ENCODE measurements at regions of chr1 and their contacts with region 1.

Region 1: DNA sequence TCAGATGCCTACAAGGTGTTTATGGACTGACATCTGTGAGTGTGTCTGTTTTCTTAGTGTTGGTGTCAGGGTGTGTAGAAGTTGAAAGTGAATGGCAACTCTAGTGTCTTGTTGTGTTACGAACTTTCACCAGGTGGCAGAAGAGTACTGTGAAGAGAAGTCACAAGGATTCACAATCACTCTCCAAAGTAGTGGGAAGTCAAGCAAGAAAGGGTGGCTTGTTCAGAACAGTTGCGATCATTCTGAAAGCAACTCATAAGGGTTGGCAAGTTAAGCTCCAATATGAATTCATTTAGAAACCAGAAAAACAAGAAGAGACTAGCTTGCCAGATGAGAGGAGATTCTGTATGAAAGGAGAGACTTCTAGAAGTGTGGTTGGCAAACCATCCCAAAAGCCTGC is 86.1 kb downstream of the FASLG start:
- DNase-seq: peak; percentile 82
- H3K4me3 ChIP-seq: no peak overlapping the region
- H3K27ac ChIP-seq: peak overlapping the region; percentile 86
- H3K4me1 ChIP-seq: peaks cover 21% of the 10 kb centered on the region
- H3K27me3 ChIP-seq: no peaks in the 10 kb centered on the region
- CTCF ChIP-seq: peak; percentile 64 to 66
- POLR2A ChIP-seq: no peak

Region 2: DNA sequence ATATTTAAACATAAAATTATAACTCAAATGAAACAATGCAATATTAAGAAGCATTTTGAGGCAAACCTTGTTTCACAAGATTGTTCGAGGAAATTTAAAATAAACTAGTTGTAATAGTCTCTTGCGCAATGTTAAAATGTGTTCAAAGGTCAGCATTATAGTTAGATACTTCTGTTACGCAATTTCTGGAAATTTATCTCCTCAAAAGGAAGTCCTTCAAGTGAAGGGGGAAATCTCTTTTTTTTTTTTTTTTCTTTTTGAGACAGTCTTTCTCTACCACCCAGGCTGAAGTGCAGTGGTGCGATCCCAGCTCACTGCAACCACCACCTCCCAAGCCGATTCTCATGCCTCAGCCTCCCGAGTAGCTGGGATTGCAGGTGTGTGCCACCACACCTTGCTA is 1378.9 kb before region 1 on chr1:
- CTCF ChIA-PET with region 1: no interaction called
- POLR2A ChIA-PET with region 1: no interaction called
- dilution Hi-C with region 1: no loop called
- intact Hi-C with region 1: no loop called
- DNase-seq: no peak
- H3K4me3 ChIP-seq: no peak overlapping the region
- H3K27ac ChIP-seq: no peak overlapping the region
- H3K4me1 ChIP-seq: no peaks in the 10 kb centered on the region
- H3K27me3 ChIP-seq: no peaks in the 10 kb centered on the region
- CTCF ChIP-seq: no peak
- POLR2A ChIP-seq: no peak

Region 3: DNA sequence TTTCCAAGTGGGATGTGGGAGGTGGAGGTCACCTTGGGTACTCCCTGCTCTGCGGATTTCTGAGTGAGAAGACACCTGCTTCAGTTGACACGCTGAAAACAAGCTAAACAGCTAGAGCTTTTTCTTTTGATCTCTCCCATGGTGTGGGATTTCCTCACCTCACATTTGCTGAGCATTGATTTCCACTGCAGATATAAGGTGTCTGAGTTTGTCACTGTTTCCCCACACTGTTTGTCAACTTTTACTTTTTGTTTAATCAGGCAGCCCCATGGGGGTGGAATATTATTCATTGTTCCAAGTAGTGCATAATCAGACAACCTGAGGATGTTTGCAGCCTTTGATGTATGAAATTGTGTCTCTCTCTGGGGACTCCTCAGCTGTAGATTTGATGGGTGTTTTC is 36.6 kb before region 1 on chr1:
- CTCF ChIA-PET with region 1: no interaction called
- POLR2A ChIA-PET with region 1: no interaction called
- dilution Hi-C with region 1: no loop called
- intact Hi-C with region 1: no loop called
- DNase-seq: no peak
- H3K4me3 ChIP-seq: no peak overlapping the region
- H3K27ac ChIP-seq: no peak overlapping the region
- H3K4me1 ChIP-seq: no peaks in the 10 kb centered on the region
- H3K27me3 ChIP-seq: no peaks in the 10 kb centered on the region
- CTCF ChIP-seq: no peak
- POLR2A ChIP-seq: no peak

Region 4: GRCh38 chr1:172826096-172826743 is 81.2 kb after region 1 on chr1:
- CTCF ChIA-PET with region 1: interaction called, 30 read pairs
- POLR2A ChIA-PET with region 1: no interaction called
- dilution Hi-C with region 1: no loop called
- intact Hi-C with region 1: loop called (anchors 1 kb)
- DNase-seq: peak; percentile 80
- H3K4me3 ChIP-seq: no peak overlapping the region
- H3K27ac ChIP-seq: peak overlapping the region; percentile 72
- H3K4me1 ChIP-seq: peaks cover 8% of the 10 kb centered on the region
- H3K27me3 ChIP-seq: no peaks in the 10 kb centered on the region
- CTCF ChIP-seq: peak; percentile 50 to 51
- POLR2A ChIP-seq: no peak

Region 5: GRCh38 chr1:172948457-172948856 is 203.4 kb after region 1 on chr1:
- CTCF ChIA-PET with region 1: interaction called, 4 read pairs
- POLR2A ChIA-PET with region 1: no interaction called
- dilution Hi-C with region 1: no loop called
- intact Hi-C with region 1: loop called (anchors 1 kb)
- DNase-seq: peak; percentile 89
- H3K4me3 ChIP-seq: no peak overlapping the region
- H3K27ac ChIP-seq: peak overlapping the region; percentile 95
- H3K4me1 ChIP-seq: peaks cover 36% of the 10 kb centered on the region
- H3K27me3 ChIP-seq: no peaks in the 10 kb centered on the region
- CTCF ChIP-seq: no peak
- POLR2A ChIP-seq: peak; percentile 25

Region 6: DNA sequence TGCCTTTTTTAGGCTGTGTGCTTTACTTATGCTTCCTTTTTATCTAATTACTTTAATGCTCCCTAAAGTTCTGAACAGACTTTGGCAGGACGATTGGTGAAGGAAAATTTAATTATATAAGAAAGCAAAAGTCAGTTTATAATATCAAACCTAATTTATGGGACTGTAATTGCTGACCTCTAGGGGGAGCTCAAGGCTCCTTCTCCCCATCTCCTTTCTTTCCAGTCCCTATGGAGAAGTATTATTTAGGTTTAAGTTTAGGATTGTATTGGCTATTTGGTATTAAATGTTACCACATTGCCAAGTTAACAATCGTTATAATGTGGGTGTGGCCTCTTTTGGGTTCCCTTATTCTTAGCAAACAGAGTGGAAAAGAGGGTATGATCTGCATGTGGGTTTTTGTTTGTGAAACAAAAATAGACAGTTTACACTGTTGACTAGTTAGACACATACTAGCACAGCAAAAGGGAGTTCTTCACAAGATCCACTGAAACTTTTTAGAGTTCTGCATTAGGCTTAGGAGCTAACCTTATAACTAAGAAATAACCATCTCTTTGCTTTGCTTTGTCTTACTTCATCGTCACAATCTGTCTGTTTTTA is 510.3 kb after region 1 on chr1:
- CTCF ChIA-PET with region 1: interaction called, 3 read pairs
- POLR2A ChIA-PET with region 1: no interaction called
- dilution Hi-C with region 1: no loop called
- intact Hi-C with region 1: loop called (anchors 2 kb)
- DNase-seq: peak; percentile 56
- H3K4me3 ChIP-seq: no peak overlapping the region
- H3K27ac ChIP-seq: no peak overlapping the region
- H3K4me1 ChIP-seq: no peaks in the 10 kb centered on the region
- H3K27me3 ChIP-seq: no peaks in the 10 kb centered on the region
- CTCF ChIP-seq: peak; percentile 61 to 66
- POLR2A ChIP-seq: no peak

Region 7: DNA sequence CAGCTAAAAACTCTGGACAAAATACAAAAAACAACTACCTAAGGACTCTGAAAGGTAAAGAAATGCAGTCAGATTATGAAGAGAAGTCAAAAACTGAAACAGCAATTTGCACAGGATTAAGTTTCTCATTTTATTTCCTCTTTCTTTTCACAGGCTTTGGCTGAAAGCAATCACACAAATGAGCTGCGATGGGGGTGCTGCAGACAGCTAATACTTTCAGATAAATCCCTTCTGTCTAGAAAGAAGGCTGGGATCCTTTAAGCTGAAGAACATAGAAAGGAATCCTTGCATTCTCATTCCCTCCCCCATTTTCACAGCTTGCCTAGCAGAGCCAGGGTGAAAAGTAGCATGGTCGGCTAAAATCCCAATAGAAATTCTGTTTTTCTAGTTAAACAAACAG is 700.1 kb after region 1 on chr1:
- CTCF ChIA-PET with region 1: no interaction called
- POLR2A ChIA-PET with region 1: no interaction called
- dilution Hi-C with region 1: no loop called
- intact Hi-C with region 1: no loop called
- DNase-seq: no peak
- H3K4me3 ChIP-seq: no peak overlapping the region
- H3K27ac ChIP-seq: no peak overlapping the region
- H3K4me1 ChIP-seq: no peaks in the 10 kb centered on the region
- H3K27me3 ChIP-seq: no peaks in the 10 kb centered on the region
- CTCF ChIP-seq: no peak
- POLR2A ChIP-seq: no peak

Region 8: DNA sequence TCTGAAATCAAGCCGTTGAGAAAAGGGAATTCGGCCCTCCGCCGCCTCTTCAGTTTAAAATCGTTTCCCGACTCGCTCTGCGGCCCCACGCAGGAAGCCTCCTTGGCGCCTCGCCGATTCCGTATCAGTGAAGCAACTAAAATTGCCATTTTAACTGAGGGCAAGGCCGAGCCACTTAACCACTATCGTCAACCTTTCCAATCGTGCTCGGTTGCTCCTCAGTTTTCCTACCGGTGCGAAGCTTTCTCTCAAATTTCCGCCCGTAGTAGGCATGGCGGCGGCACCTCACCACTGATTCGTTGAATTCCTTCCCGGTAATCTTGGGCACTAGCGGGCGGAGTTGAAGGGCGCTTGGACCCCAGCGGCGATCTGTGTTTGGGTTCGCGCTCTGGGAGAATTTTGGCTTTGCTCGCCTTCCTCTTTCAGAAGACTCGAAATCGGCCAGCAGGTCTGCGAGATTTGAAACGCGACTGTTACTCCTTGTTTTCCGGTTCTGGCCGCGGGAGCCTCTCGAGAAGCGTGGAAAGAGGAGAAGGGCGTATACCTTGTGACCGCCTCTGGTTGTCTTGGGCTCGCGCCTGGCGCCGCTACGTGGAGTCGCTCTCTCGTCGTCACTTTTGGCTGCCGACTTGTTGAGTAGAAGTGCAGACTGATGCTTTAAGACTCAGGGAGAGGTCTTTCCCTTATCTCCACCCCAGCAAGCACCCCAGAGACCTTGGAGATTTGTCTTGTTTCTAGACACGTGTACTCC is 1079.5 kb after region 1 on chr1 and contains the starts of genes CENPL and DARS2:
- CTCF ChIA-PET with region 1: interaction called, 15 read pairs
- POLR2A ChIA-PET with region 1: no interaction called
- dilution Hi-C with region 1: no loop called
- intact Hi-C with region 1: loop called (anchors 1 kb)
- DNase-seq: peak; percentile 98
- H3K4me3 ChIP-seq: peak within 1 kb of the TSS; percentile 87 to 92 (median 87)
- H3K27ac ChIP-seq: peak within 1 kb of the TSS; percentile 92
- H3K4me1 ChIP-seq: peaks cover 15% of the 10 kb centered on the region
- H3K27me3 ChIP-seq: no peaks in the 10 kb centered on the region
- CTCF ChIP-seq: no peak
- POLR2A ChIP-seq: peak; percentile 85
- total RNA-seq, gene CENPL: 19.0 and 20.8 TPM in 2 replicates
- total RNA-seq, gene DARS2: 30.5 and 33.6 TPM in 2 replicates

Region 9: DNA sequence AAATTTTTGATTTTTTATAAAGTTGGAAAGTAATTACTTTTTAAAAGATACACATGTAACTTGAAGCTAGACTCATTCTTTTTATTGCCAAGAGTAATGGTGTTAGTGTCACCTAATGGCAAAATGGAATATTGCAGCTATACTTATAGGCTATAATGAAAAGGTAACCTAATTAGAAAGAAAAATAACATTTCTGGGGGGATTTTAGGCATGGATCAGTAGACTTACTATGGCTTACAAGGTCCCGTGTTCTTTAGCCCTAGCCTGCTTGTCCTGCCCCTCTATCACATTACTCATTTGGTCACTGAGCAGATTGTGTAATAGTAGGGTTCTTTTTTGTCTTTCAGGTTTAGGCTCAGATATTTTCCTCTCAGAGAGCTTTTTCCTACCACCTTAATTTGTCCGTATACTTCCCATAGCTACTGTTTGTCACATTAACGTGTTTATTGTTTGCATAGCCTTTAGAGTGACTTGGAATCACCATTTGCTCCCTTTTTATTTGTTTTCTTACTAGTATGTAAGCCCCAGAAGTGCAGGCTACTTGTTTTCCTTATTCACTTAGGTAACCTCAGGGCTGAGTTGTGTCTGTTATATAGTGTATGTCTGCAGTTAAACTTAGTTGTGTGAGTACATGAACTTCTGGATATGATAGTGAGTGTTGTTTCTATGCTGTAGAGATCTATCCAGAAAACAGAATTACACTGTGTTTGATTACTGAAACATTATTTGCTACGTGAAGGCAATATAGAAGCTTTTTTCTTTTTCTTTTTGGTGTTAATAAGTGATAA is 1473.0 kb after region 1 on chr1:
- CTCF ChIA-PET with region 1: interaction called, 10 read pairs
- POLR2A ChIA-PET with region 1: no interaction called
- dilution Hi-C with region 1: no loop called
- intact Hi-C with region 1: loop called (anchors 1 kb)
- DNase-seq: peak; percentile 66
- H3K4me3 ChIP-seq: no peak overlapping the region
- H3K27ac ChIP-seq: no peak overlapping the region
- H3K4me1 ChIP-seq: no peaks in the 10 kb centered on the region
- H3K27me3 ChIP-seq: no peaks in the 10 kb centered on the region
- CTCF ChIP-seq: peak; percentile 46 to 50
- POLR2A ChIP-seq: no peak